PC-3 (cell line): ENCODE measurements at regions of chr1 and their contacts with region 1.

Region 1: DNA sequence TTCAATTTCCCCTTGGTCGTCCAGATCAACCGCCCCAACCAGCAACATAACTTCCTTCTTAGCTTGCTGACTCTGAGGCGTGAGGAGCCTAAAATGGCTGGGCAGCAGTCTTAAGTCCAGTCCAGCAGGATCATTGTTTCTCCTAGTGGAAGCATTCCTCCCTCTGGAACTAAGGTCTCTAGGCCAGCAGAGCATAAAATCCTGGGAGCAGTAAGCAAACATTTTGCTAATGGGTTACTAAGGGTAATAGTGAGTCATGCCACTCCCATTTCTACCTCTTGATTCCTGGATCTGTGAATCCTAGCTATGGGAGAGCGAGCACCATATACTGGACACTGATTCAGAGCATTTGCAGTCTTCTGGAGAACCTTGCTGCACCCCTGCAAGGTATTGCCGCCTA is 59.9 kb downstream of the ADSS2 start:
- DNase-seq: peak; percentile 96
- ATAC-seq: peak; percentile 96
- H3K4me3 ChIP-seq: no peak overlapping the region
- H3K27ac ChIP-seq: peak overlapping the region; percentile 82
- H3K4me1 ChIP-seq: peaks cover 14% of the 10 kb centered on the region
- H3K27me3 ChIP-seq: no peaks in the 10 kb centered on the region
- CTCF ChIP-seq: no peak; the same call in 1 of the 2 replicates

Region 2: GRCh38 chr1:244322791-244323521 is 68.8 kb before region 1 on chr1:
- CTCF ChIA-PET with region 1: no interaction called
- POLR2A ChIA-PET with region 1: no interaction called
- intact Hi-C with region 1: loop called (anchors 2 kb)
- DNase-seq: peak; percentile 99
- ATAC-seq: peak; percentile 92
- H3K4me3 ChIP-seq: peak overlapping the region; percentile 52
- H3K27ac ChIP-seq: peak overlapping the region; percentile 87
- H3K4me1 ChIP-seq: peaks cover 38% of the 10 kb centered on the region
- H3K27me3 ChIP-seq: no peaks in the 10 kb centered on the region
- CTCF ChIP-seq: no peak

Region 3: DNA sequence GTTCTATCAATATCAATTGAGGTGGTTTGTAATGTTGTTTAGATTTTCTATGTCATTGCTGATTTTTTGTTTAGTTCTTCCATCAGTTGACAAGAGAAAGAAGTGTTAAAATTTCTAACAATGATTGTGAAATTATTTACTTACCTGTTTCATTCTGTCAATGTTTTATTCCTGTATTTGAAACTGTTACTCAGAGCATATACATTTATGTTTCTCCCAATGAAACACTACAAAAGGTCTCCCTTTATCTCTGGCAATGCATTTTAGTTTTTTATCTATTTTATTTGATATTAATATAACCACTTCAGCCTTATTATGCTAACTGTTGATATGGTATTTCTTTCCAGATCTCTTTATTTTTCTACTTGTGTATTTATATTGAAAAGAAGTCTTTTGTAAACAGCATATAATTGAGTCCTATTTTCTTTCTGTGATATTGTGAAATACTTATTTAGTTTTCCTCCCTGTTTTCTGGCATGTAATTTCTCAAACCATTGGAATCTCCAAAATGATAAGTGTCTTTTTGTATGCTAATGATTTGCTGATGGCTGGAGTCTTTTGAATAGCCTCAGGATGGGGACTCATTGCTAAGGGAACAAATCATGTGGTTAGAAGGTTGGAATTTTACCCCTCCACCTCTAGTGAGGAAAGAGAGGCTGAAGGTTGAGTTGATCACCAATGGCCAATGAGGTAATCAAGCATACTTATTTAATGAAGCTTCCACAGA is 62.0 kb before region 1 on chr1:
- CTCF ChIA-PET with region 1: no interaction called
- POLR2A ChIA-PET with region 1: interaction called, 14 read pairs
- intact Hi-C with region 1: no loop called
- DNase-seq: peak; percentile 76
- ATAC-seq: peak; percentile 74
- H3K4me3 ChIP-seq: no peak overlapping the region
- H3K27ac ChIP-seq: peak overlapping the region; percentile 63
- H3K4me1 ChIP-seq: peaks cover 28% of the 10 kb centered on the region
- H3K27me3 ChIP-seq: no peaks in the 10 kb centered on the region
- CTCF ChIP-seq: no peak

Region 4: GRCh38 chr1:244353551-244354091 is 38.1 kb before region 1 on chr1:
- CTCF ChIA-PET with region 1: no interaction called
- POLR2A ChIA-PET with region 1: no interaction called
- intact Hi-C with region 1: loop called (anchors 2 kb)
- DNase-seq: peak; percentile 95
- ATAC-seq: peak; percentile 100
- H3K4me3 ChIP-seq: no peak overlapping the region
- H3K27ac ChIP-seq: peak overlapping the region; percentile 75
- H3K4me1 ChIP-seq: peaks cover 27% of the 10 kb centered on the region
- H3K27me3 ChIP-seq: no peaks in the 10 kb centered on the region
- CTCF ChIP-seq: no peak

Region 5: DNA sequence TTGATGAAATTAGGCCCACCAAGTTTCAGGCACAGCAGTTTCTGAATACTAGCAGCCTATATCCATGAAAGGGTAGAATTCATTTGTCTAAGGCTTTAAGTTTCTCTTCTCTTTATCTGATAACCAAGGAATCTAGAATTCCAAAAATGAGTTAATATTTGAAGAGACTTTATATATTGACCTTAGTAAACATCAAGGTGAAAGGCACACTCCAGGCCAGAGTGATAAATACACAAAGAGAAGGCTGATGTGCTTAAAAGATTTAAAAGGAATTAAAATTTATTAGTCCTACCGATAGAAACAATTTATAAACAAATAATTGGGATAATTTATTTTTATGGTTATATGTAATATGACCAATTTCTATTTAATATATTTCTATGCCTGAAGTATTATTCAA is 167.8 kb after region 1 on chr1:
- CTCF ChIA-PET with region 1: no interaction called
- POLR2A ChIA-PET with region 1: interaction called, 14 read pairs
- intact Hi-C with region 1: no loop called
- DNase-seq: no peak
- ATAC-seq: no peak
- H3K4me3 ChIP-seq: no peak overlapping the region
- H3K27ac ChIP-seq: no peak overlapping the region
- H3K4me1 ChIP-seq: no peaks in the 10 kb centered on the region
- H3K27me3 ChIP-seq: no peaks in the 10 kb centered on the region
- CTCF ChIP-seq: no peak